GM18951 (cell line): ENCODE measurements at regions of chr11 and their contacts with region 1.

Region 1: GRCh38 chr11:17722000-17722643 is 2.8 kb downstream of the MYOD1 start:
- POLR2A ChIP-seq: no peak

Region 2: DNA sequence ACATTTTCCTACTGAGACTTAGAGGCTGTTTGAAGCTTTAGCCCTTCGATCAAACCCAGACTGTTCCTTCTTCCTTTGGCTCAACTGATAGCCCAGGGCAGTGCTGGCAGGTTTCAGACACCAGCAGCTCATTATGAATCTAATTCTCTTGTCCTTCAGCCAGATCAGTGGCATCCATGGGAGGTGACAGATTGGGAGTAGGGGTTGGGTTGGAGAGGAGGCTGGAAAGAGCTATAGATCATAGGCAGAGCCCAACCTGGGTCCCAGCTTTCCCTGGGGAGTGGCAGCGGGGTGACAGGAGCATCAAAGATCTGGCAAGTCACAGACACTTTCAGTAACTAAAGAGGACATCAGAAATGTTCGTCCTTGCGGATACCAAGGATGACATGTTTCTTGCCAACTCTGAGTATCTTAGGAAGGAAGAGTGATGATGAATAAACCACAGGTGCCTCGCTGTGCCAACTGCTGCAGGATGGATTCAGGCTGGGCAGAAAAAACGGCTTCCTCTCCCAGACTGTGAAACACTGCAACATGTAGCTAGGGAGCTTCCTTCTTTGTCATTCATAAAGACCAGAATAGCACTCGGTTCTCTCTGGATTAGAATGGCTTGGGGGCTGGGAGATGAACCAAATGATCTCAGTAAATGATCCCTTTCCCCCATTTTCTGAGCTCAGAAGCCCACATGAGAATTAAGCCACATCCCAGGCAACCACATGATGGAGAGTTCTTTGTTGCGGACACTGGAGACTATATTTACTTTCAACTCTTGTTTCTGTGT is 264.5 kb before region 1 on chr11:
- in situ Hi-C with region 1: no loop called
- POLR2A ChIP-seq: no peak

Region 3: GRCh38 chr11:17979770-17980371 is 257.7 kb after region 1 on chr11:
- in situ Hi-C with region 1: loop called (anchors 10 kb)
- POLR2A ChIP-seq: no peak

Region 4: DNA sequence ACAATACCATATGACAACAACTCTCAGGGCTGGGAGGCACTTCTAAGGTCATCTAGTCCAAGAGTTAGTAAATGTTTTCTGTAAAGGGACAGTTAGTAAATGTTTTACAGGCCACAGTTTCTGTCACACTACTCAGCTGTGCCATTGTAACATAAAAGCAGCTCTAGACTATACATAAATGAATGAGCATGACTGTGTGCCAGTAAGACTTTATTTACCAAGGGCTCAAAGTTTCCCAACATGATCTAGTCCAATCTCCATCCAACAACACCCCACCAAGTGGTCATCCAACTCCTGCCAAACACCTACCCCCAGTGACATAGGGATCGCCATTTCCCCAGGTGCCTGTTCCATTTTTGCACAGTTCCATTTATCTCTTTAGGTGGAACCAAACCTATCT is 278.6 kb after region 1 on chr11:
- in situ Hi-C with region 1: no loop called
- POLR2A ChIP-seq: no peak